WTC11 (cell line): ENCODE measurements at regions of chr20 and their contacts with region 1.

Region 1: GRCh38 chr20:884983-885952 is 30.9 kb downstream of the ANGPT4 start:
- DNase-seq: peak; percentile 90
- ATAC-seq: peak; percentile 99
- H3K4me3 Mint-ChIP-seq: peak overlapping the region; percentile 55
- H3K27ac Mint-ChIP-seq: no peak overlapping the region
- H3K4me1 Mint-ChIP-seq: peaks cover 9% of the 10 kb centered on the region
- H3K27me3 Mint-ChIP-seq: peaks cover 17% of the 10 kb centered on the region
- CTCF ChIP-seq: no peak

Region 2: DNA sequence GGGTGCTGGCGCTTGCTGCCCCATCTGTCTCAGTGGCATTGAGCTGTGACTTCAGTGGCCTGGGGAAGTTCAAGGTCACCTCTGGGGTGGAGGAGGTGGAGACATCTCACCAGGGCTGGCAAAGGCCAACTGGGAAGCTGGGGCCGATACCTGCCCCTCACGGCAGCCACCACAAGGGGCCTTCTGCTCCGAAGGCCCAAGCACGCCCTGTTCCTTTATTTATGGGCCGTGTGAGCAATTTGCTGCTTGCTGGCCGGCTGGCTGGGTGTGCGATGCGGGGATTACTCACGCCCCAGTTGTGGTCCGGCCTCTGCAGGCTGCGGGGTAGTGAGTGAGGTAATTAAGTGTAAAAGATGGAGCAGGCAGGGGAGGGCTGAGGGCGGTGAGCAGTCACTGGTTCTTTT is 196.5 kb before region 1 on chr20:
- CTCF ChIA-PET with region 1: no interaction called
- POLR2A ChIA-PET with region 1: no interaction called
- DNase-seq: peak; percentile 46
- ATAC-seq: peak; percentile 94
- H3K4me3 Mint-ChIP-seq: no peak overlapping the region
- H3K27ac Mint-ChIP-seq: no peak overlapping the region
- H3K4me1 Mint-ChIP-seq: peaks cover 16% of the 10 kb centered on the region
- H3K27me3 Mint-ChIP-seq: no peaks in the 10 kb centered on the region
- CTCF ChIP-seq: no peak

Region 3: GRCh38 chr20:833450-834150 is 51.7 kb before region 1 on chr20 and contains the start of gene FAM110A:
- CTCF ChIA-PET with region 1: interaction called, 11 read pairs
- POLR2A ChIA-PET with region 1: no interaction called
- DNase-seq: peak; percentile 96
- ATAC-seq: peak; percentile 97
- H3K4me3 Mint-ChIP-seq: peak within 1 kb of the TSS; percentile 76
- H3K27ac Mint-ChIP-seq: no peak within 1 kb of the TSS
- H3K4me1 Mint-ChIP-seq: peaks cover 12% of the 10 kb centered on the region
- H3K27me3 Mint-ChIP-seq: peaks cover 20% of the 10 kb centered on the region
- CTCF ChIP-seq: no peak
- total RNA-seq, gene FAM110A: 17.2 to 18.8 TPM (median 18.0 TPM) in 3 replicates

Region 4: GRCh38 chr20:872855-873521 is 12.3 kb before region 1 on chr20:
- CTCF ChIA-PET with region 1: interaction called, 19 read pairs
- POLR2A ChIA-PET with region 1: no interaction called
- DNase-seq: peak; percentile 65
- ATAC-seq: peak; percentile 97
- H3K4me3 Mint-ChIP-seq: no peak overlapping the region
- H3K27ac Mint-ChIP-seq: no peak overlapping the region
- H3K4me1 Mint-ChIP-seq: peaks cover 10% of the 10 kb centered on the region
- H3K27me3 Mint-ChIP-seq: no peaks in the 10 kb centered on the region
- CTCF ChIP-seq: no peak

Region 5: DNA sequence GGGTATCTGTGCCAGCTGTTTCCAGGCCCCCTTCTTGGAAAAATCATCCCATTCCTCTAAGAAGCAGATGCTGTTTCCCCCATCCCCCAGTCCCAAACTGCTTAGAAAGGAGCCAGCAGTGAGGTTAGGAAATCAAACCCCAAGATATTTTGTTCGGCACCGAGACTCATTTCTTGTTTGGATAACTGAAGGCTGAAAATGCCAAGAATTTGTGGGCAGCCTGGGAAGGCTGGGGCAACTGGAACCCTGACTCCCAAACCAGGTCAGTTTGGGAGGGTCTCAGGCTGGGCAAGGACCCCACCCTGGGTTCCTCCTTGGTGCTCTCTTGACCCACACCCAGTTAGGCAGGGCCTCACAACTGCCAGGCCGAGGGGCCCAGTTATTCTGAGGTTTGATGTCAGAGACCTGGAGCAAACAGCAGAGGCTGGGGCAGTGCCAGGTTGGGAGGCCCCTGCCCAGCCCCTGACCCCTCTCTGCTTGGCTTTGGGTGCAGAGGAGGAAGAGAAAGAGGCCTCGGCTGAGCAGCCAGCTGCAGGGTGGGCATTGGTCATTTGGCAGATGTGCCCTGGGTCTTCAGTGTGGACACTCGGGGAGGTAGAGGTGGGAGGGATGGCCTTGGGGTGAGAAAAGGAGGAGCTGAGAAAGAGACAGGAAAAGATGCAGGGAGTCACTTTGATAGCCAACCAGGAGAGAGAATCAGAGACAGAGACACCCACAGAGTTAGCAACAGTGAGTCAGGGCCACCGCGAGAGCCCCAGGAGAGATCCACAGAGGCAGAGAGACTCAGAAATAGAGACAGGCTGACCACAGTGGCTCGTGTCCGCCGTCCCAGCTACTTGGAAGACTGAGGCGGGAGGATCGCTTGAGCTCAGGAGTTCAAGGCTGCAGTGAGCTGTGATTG is 25.9 kb after region 1 on chr20:
- CTCF ChIA-PET with region 1: interaction called, 36 read pairs
- POLR2A ChIA-PET with region 1: no interaction called
- DNase-seq: no peak
- ATAC-seq: no peak
- H3K4me3 Mint-ChIP-seq: no peak overlapping the region
- H3K27ac Mint-ChIP-seq: no peak overlapping the region; the same call in 1 of the 2 replicates
- H3K4me1 Mint-ChIP-seq: peaks cover 3% of the 10 kb centered on the region; the same call in 1 of the 2 replicates
- H3K27me3 Mint-ChIP-seq: no peaks in the 10 kb centered on the region
- CTCF ChIP-seq: no peak

Region 6: DNA sequence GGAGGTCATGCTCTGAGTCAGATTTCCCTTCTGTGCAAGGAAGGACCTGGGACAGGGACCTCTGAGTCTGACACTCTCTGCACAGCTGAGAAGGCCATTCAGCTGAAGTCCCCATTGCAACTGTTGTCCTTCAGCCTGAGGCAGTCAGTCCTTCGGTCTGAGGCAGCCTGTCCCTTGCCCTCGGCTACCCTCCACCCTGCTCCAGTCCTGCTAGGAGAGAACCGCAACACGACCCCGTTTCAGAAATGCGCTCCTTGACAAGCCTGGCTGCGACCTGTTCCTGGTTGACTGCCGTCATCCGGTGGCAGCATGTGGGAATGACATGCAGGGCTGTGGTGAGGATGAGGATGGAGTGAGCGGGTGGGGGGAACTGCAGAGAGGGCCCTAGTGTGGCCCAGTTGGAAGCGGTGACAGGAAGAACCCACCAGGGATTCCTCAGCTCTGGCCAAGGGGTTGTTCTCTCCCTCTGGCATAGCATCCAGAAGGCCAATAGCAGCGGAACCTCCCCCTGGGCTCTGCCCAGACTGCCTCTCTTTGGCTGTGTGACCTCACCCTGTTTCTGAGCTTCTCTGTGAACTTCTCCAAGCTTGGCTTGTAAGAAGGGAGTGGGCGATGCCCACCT is 71.2 kb after region 1 on chr20:
- CTCF ChIA-PET with region 1: interaction called, 56 read pairs
- POLR2A ChIA-PET with region 1: interaction called, 3 read pairs
- DNase-seq: peak; percentile 88
- ATAC-seq: peak; percentile 88
- H3K4me3 Mint-ChIP-seq: no peak overlapping the region
- H3K27ac Mint-ChIP-seq: no peak overlapping the region
- H3K4me1 Mint-ChIP-seq: peaks cover 2% of the 10 kb centered on the region; the same call in 1 of the 2 replicates
- H3K27me3 Mint-ChIP-seq: peaks cover 5% of the 10 kb centered on the region
- CTCF ChIP-seq: peak; percentile 96